Posterior cingulate gyrus (tissue), 11 donors: ENCODE measurements at regions of chr16 and their contacts with region 1.

Region 1: GRCh38 chr16:788394-789126 is at the start of gene CHTF18:
- DNase-seq: peak; percentile 80 to 99 (median 88)

Region 2: GRCh38 chr16:711548-712320 is 76.8 kb before region 1 on chr16:
- intact Hi-C with region 1: loop called (anchors 2 kb)
- DNase-seq: peak in 9 of 10 donors; percentile 73 to 97 (median 85)

Region 3: GRCh38 chr16:807347-808084 is 19.0 kb after region 1 on chr16:
- intact Hi-C with region 1: loop called (anchors 1 kb)
- DNase-seq: peak; percentile 86 to 99 (median 92)